Endothelial cell of umbilical vein (primary cell): ENCODE measurements at regions of chr5 and their contacts with region 1.

Region 1: DNA sequence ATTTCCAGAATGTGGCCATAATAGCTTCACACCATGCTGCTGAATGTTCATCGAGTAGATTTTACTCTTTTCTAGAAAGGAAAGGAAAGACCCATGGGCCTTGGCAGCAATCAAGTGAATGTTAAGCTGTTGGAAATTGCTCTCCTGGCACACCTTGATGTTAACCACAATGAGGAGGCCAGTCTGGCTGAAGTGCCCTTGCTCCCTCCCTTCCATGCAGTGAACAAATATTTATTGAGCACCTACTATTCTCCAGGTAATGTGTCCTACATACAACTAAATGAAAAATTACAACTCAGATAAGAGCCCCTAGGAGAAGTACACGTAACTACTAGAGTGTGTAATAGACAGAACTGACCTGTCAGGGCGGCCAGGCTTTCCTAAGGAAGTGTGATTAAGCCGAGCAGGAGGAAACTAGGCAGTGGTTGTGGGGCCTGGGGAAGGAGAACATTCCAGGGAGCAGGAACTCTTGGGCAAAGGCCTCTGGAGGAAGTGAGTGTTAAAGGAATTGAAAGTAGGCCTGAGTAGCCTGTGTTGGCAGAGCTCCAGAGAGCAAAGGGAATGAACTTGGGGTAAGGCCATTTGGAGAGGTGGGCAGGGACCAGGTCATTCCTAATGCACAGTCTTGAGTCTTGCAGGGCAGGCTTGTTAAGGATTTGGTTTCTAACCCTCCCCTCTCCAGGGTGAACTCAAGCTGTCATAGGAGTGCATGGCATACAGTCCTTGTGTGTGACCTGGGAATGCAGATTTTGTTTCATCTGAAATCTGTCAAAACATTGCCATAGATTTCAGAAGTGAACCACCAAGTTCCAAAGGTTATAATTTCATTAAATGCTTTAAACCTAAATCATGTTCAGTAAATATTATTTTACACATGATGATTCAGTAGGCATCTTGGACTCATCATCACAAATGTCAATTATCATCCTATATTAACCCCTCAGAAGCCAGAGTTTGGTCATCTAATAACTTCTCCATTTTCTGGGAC is 9.0 kb upstream of the ZSWIM6 start:
- DNase-seq: peak; percentile 94
- H3K4me3 ChIP-seq: no peak overlapping the region
- H3K27ac ChIP-seq: peak overlapping the region; percentile 72
- H3K4me1 ChIP-seq: peaks cover 58% of the 10 kb centered on the region
- H3K27me3 ChIP-seq: no peaks in the 10 kb centered on the region
- CTCF ChIP-seq: no peak
- POLR2A ChIP-seq: peak; percentile 55

Region 2: GRCh38 chr5:61132559-61132958 is 190.5 kb before region 1 on chr5:
- CTCF ChIA-PET with region 1: interaction called, 3 read pairs
- POLR2A ChIA-PET with region 1: interaction called, 10 read pairs
- dilution Hi-C with region 1: no loop called
- intact Hi-C with region 1: no loop called
- DNase-seq: no peak
- H3K4me3 ChIP-seq: no peak overlapping the region
- H3K27ac ChIP-seq: no peak overlapping the region
- H3K4me1 ChIP-seq: no peaks in the 10 kb centered on the region
- H3K27me3 ChIP-seq: no peaks in the 10 kb centered on the region
- CTCF ChIP-seq: no peak
- POLR2A ChIP-seq: no peak